Caco-2 (cell line): ENCODE measurements at regions of chr1 and their contacts with region 1.

Region 1: GRCh38 chr1:119140177-119141019 is at the start of gene WARS2:
- DNase-seq: peak; percentile 92 to 96
- H3K4me3 ChIP-seq: peak within 1 kb of the TSS; percentile 45
- H3K4me3 Mint-ChIP-seq: no peak within 1 kb of the TSS
- H3K27ac Mint-ChIP-seq: no peak within 1 kb of the TSS
- H3K4me1 ChIP-seq: peaks cover 17% of the 10 kb centered on the region; the same call in 1 of the 2 replicates
- H3K4me1 Mint-ChIP-seq: peaks cover 9% of the 10 kb centered on the region
- H3K27me3 ChIP-seq: no peaks in the 10 kb centered on the region
- H3K27me3 Mint-ChIP-seq: no peaks in the 10 kb centered on the region
- CTCF ChIP-seq: no peak
- total RNA-seq, gene WARS2: 11.9 and 12.1 TPM in 2 replicates

Region 2: GRCh38 chr1:118960026-118960561 is 180.3 kb before region 1 on chr1:
- CTCF ChIA-PET with region 1: no interaction called
- POLR2A ChIA-PET with region 1: no interaction called
- intact Hi-C with region 1: loop called (anchors 1 kb)
- DNase-seq: no peak
- H3K4me3 ChIP-seq: no peak overlapping the region
- H3K4me3 Mint-ChIP-seq: peak overlapping the region; percentile 29
- H3K27ac Mint-ChIP-seq: peak overlapping the region; percentile 55
- H3K4me1 ChIP-seq: peaks cover 12% of the 10 kb centered on the region; the same call in 1 of the 2 replicates
- H3K4me1 Mint-ChIP-seq: peaks cover 16% of the 10 kb centered on the region
- H3K27me3 ChIP-seq: no peaks in the 10 kb centered on the region
- H3K27me3 Mint-ChIP-seq: no peaks in the 10 kb centered on the region
- CTCF ChIP-seq: no peak